ENCODE measurements at regions of chr9 and their contacts with region 1.

Region 1: GRCh38 chr9:129139993-129140396 is 28.8 kb downstream of the PTPA start:
- DNase-seq: peak; percentile 93
- ATAC-seq: peak; percentile 86
- H3K4me3 Mint-ChIP-seq: peak overlapping the region; percentile 75
- H3K27ac Mint-ChIP-seq: peak overlapping the region; percentile 97
- H3K4me1 Mint-ChIP-seq: peaks cover 45% of the 10 kb centered on the region
- H3K27me3 Mint-ChIP-seq: no peaks in the 10 kb centered on the region

Region 2: DNA sequence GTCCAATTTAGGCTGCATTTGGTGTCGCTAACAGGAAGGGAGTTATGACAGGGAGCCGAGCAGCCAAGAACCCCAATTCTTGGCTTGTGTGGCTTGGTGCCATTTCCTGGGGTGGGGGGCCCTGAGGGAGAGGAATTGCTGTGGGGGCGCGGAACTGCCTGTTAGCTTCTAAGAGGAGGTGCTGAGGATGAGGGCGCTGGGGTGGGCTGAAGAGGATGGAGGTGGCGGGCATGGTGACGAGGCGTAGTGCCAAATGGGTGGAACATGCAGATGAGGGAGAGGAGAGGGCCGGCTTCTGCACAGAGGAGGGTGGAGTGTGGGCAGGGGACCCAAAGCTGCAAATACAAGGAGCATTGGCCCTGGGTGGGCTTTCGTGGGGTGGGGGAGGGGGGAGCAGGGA is 10.1 kb after region 1 on chr9:
- CTCF ChIA-PET with region 1: interaction called, 30 read pairs
- DNase-seq: no peak
- ATAC-seq: no peak
- H3K4me3 Mint-ChIP-seq: no peak overlapping the region
- H3K27ac Mint-ChIP-seq: peak overlapping the region; percentile 41
- H3K4me1 Mint-ChIP-seq: peaks cover 5% of the 10 kb centered on the region
- H3K27me3 Mint-ChIP-seq: no peaks in the 10 kb centered on the region

Region 3: DNA sequence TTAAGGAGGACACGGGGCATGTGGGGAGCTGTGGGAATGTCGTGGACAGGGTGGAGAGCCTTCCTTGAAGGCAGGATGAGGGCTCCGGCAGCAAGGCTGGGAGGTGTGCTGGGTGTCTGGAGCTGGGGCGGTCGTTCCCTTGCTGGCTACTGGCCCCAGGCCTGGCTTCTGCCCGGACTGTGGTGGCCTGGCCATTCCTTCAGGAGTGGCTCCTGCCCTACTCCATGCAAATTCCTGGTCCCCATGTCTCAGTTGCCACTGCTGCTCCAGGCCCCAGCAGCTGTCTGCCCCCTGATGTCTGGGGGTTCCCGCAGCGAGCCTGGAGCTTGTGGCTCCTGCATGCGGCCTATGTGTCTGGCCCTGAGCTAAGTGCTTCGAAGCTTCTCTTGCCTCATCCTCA is 16.2 kb after region 1 on chr9:
- CTCF ChIA-PET with region 1: interaction called, 30 read pairs
- DNase-seq: no peak
- ATAC-seq: no peak
- H3K4me3 Mint-ChIP-seq: no peak overlapping the region
- H3K27ac Mint-ChIP-seq: no peak overlapping the region
- H3K4me1 Mint-ChIP-seq: no peaks in the 10 kb centered on the region
- H3K27me3 Mint-ChIP-seq: no peaks in the 10 kb centered on the region

Region 4: GRCh38 chr9:129237195-129237611 is 97.2 kb after region 1 on chr9:
- CTCF ChIA-PET with region 1: interaction called, 15 read pairs
- DNase-seq: peak; percentile 66
- ATAC-seq: peak; percentile 68
- H3K4me3 Mint-ChIP-seq: peak overlapping the region; percentile 57
- H3K27ac Mint-ChIP-seq: peak overlapping the region; percentile 82
- H3K4me1 Mint-ChIP-seq: peaks cover 53% of the 10 kb centered on the region
- H3K27me3 Mint-ChIP-seq: no peaks in the 10 kb centered on the region

Measured in activated CD8-positive, alpha-beta memory T cell treated with anti-CD3 and anti-CD28 coated beads, Interleukin-2, amount 10 ng/mL, durations not matched to agents 7 days and 5 days (primary cell).